Activated naive CD8-positive, alpha-beta T cell treated with anti-CD3 and anti-CD28 coated beads, Interleukin-2, amount 10 ng/mL, durations not matched to agents 7 days and 5 days (primary cell): ENCODE measurements at regions of chr12 and their contacts with region 1.

Region 1: DNA sequence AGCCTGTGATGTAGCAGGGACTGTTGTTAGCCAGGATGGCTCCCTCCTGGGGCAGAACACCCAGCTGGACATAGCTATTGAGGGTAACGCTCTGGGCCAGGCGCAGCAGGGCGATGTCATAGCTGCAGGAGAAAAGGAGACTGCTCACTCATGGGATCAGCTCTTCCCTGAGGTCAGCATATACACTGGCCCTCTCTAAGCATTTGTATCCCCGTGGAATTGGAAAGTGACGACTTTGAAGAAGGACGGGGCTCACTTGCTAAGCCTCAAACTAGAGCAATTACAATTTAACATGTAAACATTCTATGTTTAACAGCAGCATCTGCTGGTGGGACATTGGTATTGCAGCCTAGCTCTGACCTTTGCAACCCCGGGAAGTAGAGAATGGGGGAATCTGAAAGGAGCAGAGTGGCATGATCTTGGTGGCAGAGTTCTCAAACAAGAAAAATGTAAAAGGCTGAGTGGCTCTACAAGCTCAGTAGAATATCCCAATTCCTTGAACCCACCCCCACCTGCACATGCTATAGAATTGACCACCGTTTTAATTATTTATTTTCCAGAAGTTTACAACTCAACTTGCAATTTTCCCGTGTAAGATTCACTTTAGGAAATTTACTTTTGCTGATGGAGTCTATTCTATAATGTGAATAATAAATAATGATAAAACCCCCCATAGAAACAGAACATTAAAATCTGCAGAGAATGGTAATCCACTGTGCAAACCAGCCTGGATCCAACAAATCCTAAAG is 5.0 kb downstream of the CELA1 start:
- DNase-seq: peak; percentile 54
- ATAC-seq: peak; percentile 66
- H3K4me3 Mint-ChIP-seq: peak overlapping the region; percentile 54
- H3K27ac Mint-ChIP-seq: peak overlapping the region; percentile 71
- H3K4me1 Mint-ChIP-seq: peaks cover 10% of the 10 kb centered on the region
- H3K27me3 Mint-ChIP-seq: no peaks in the 10 kb centered on the region

Region 2: DNA sequence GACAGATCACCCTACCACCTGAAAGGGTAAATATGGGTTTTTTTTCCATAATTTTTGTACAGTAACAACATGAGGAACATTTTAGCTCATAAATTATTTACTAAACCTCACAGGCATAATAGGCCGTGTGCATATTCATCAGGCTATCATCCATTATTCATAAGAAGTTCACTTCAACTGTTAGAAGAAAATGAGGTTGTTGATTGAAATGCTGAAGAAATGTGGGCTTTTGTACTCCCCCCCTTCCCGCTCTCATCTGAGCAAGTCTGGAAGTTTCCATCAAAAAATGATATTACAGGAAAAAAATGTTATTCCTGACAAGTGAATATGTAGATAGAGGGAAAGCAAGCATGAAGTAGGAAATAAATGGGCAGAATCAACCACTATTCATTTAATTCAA is 115.7 kb before region 1 on chr12:
- POLR2A ChIA-PET with region 1: no interaction called
- DNase-seq: no peak
- ATAC-seq: no peak
- H3K4me3 Mint-ChIP-seq: no peak overlapping the region
- H3K27ac Mint-ChIP-seq: no peak overlapping the region
- H3K4me1 Mint-ChIP-seq: no peaks in the 10 kb centered on the region
- H3K27me3 Mint-ChIP-seq: no peaks in the 10 kb centered on the region

Region 3: GRCh38 chr12:51270067-51270970 is 71.1 kb before region 1 on chr12 and contains the start of gene SMAGP:
- POLR2A ChIA-PET with region 1: interaction called, 16 read pairs
- DNase-seq: peak; percentile 70
- ATAC-seq: peak; percentile 55
- H3K4me3 Mint-ChIP-seq: peak within 1 kb of the TSS; percentile 91
- H3K27ac Mint-ChIP-seq: peak within 1 kb of the TSS; percentile 68
- H3K4me1 Mint-ChIP-seq: peaks cover 24% of the 10 kb centered on the region
- H3K27me3 Mint-ChIP-seq: peaks cover 24% of the 10 kb centered on the region
- total RNA-seq, gene SMAGP: 4.1 to 5.6 TPM

Region 4: GRCh38 chr12:51320695-51321320 is 20.6 kb before region 1 on chr12:
- POLR2A ChIA-PET with region 1: interaction called, 10 read pairs
- DNase-seq: no peak
- ATAC-seq: no peak
- H3K4me3 Mint-ChIP-seq: peak overlapping the region; percentile 96
- H3K27ac Mint-ChIP-seq: peak overlapping the region; percentile 87
- H3K4me1 Mint-ChIP-seq: peaks cover 54% of the 10 kb centered on the region
- H3K27me3 Mint-ChIP-seq: no peaks in the 10 kb centered on the region